ENCODE measurements at regions of chr14 and their contacts with region 1.

Region 1: GRCh38 chr14:92973261-92973797 is 50.4 kb downstream of the CHGA start:
- DNase-seq: peak; percentile 83
- H3K4me3 ChIP-seq: no peak overlapping the region
- H3K27ac ChIP-seq: peak overlapping the region in 2 of 8 donors; percentile 56 to 65
- H3K4me1 ChIP-seq: peaks cover 0 to 33% (median 5%) of the 10 kb centered on the region in 6 donors
- H3K27me3 ChIP-seq: no peaks in the 10 kb centered on the region
- CTCF ChIP-seq: peak in 10 of 11 experiments; percentile 27 to 78 (median 62)
- POLR2A ChIP-seq: no peak

Region 2: GRCh38 chr14:92750994-92751400 is 222.3 kb before region 1 on chr14:
- intact Hi-C with region 1: loop called (anchors 5 kb)
- DNase-seq: no peak
- H3K4me3 ChIP-seq: peak overlapping the region in 5 of 8 donors; percentile 18 to 60 (median 21)
- H3K27ac ChIP-seq: peak overlapping the region in 7 of 8 donors; percentile 4 to 73 (median 58)
- H3K4me1 ChIP-seq: peaks cover 0 to 66% (median 50%) of the 10 kb centered on the region in 6 donors
- H3K27me3 ChIP-seq: peaks cover 0 to 38% (median 0%) of the 10 kb centered on the region in 7 donors
- CTCF ChIP-seq: no peak
- POLR2A ChIP-seq: no peak